ENCODE measurements at regions of chr6 and their contacts with region 1.

Region 1: GRCh38 chr6:15893556-15894268 is 230.9 kb upstream of the DTNBP1 start:
- DNase-seq: peak; percentile 53
- ATAC-seq: peak; percentile 73
- H3K4me3 ChIP-seq: no peak overlapping the region
- H3K27ac ChIP-seq: no peak overlapping the region
- H3K4me1 ChIP-seq: no peaks in the 10 kb centered on the region
- H3K27me3 ChIP-seq: no peaks in the 10 kb centered on the region
- CTCF ChIP-seq: peak; percentile 39 to 77 (median 60); a peak in 5 of 6 replicates
- POLR2A ChIP-seq: no peak
- RAD21 ChIP-seq: peak; percentile 58

Region 2: GRCh38 chr6:15864038-15864707 is 29.5 kb before region 1 on chr6:
- CTCF ChIA-PET with region 1: no interaction called
- POLR2A ChIA-PET with region 1: no interaction called
- RAD21 ChIA-PET with region 1: no interaction called
- intact Hi-C with region 1: no loop called
- DNase-seq: no peak
- ATAC-seq: no peak
- H3K4me3 ChIP-seq: no peak overlapping the region
- H3K27ac ChIP-seq: no peak overlapping the region
- H3K4me1 ChIP-seq: no peaks in the 10 kb centered on the region
- H3K27me3 ChIP-seq: peaks cover 4% of the 10 kb centered on the region; the same call in 1 of the 2 replicates
- CTCF ChIP-seq: no peak
- POLR2A ChIP-seq: no peak
- RAD21 ChIP-seq: no peak

Region 3: GRCh38 chr6:16206595-16207037 is 312.9 kb after region 1 on chr6:
- CTCF ChIA-PET with region 1: no interaction called
- POLR2A ChIA-PET with region 1: no interaction called
- RAD21 ChIA-PET with region 1: no interaction called
- intact Hi-C with region 1: loop called (anchors 5 kb)
- DNase-seq: peak; percentile 37
- ATAC-seq: peak; percentile 91
- H3K4me3 ChIP-seq: no peak overlapping the region
- H3K27ac ChIP-seq: no peak overlapping the region
- H3K4me1 ChIP-seq: peaks cover 0 to 3% of the 10 kb centered on the region in 2 experiments; a peak in 1 of 4 replicates
- H3K27me3 ChIP-seq: peaks cover 6% of the 10 kb centered on the region; the same call in 1 of the 2 replicates
- CTCF ChIP-seq: peak; percentile 88 to 97 (median 91)
- POLR2A ChIP-seq: no peak
- RAD21 ChIP-seq: peak; percentile 93

Measured in HCT116 (cell line).